Right ventricle myocardium superior (tissue), 1 donor: ENCODE measurements at regions of chr1 and their contacts with region 1.

Region 1: GRCh38 chr1:31460027-31460426 is 47.0 kb downstream of the SERINC2 start:
- DNase-seq: no peak
- ATAC-seq: no peak

Region 2: DNA sequence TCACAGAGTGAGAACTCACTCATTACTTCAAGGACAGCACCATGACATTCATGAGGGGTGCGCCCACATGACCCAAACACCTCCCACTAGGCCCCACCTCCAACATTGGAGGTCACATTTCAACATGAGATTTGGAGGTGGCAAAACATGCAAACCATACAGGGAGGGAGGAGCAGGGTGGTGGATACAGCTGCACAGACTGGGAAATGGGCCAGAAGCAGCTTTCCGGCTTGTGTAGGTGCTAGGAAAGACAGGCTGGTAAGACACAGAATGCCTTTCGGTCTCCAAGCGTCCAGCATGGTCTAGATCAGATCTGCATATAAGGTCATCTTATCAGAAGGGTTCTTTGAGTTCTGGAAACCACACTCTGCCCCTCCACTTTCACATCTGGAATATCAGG is 81.2 kb after region 1 on chr1:
- intact Hi-C with region 1: loop called (anchors 5 kb)
- DNase-seq: no peak
- ATAC-seq: no peak